IMR-90 (cell line): ENCODE measurements at regions of chr17 and their contacts with region 1.

Region 1: DNA sequence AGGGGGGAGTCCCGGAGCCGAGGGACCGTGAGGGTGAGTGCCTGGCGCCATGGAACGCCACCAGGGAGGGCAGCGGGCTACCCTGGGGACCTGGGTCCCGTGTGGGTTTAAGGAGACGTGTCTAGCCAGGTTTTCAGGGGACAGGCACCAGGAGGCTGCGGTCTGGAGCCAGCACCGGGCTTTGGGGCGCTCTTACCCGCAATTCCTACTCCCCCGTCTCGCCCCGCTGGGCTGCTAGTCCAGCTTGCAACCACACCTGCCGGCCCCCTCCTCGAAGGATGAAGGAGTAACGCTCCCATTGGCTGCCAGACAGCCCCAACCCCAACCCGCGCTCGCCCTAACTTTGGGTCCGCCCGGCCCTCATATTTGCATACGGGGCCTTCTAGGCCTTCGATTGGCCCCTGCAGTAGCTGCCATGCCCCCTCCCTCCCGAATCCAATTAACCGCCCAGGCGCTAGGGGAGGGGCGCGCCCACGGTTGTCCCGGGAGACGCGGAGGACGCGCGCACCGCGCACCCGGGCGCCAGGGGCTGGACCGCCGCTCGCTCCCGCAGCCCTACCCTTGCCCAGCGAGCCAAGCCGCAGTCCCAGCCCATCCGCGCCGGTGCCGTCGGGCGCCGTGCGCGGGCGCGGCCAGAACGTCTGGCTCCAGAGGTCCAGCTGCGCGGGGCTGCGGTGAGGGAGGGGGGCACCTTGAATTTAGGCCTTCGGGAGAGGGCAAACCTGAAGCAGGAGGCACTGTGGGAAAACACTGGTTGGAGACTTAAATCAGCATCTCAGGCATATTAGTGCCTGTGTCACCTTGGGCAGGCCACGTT is at the start of gene TTLL6:
- DNase-seq: peak; percentile 56
- ATAC-seq: peak; percentile 99
- H3K4me3 ChIP-seq: peak within 1 kb of the TSS; percentile 41
- H3K27ac ChIP-seq: no peak within 1 kb of the TSS
- H3K4me1 ChIP-seq: 0 out of 2 replicates have a peak, but pooled peaks cover 2% of the 10 kb centered on the region
- H3K27me3 ChIP-seq: peaks cover 31% of the 10 kb centered on the region
- CTCF ChIP-seq: no peak
- POLR2A ChIP-seq: no peak
- RAD21 ChIP-seq: no peak
- total RNA-seq, gene TTLL6: not detected in 2 replicates

Region 2: DNA sequence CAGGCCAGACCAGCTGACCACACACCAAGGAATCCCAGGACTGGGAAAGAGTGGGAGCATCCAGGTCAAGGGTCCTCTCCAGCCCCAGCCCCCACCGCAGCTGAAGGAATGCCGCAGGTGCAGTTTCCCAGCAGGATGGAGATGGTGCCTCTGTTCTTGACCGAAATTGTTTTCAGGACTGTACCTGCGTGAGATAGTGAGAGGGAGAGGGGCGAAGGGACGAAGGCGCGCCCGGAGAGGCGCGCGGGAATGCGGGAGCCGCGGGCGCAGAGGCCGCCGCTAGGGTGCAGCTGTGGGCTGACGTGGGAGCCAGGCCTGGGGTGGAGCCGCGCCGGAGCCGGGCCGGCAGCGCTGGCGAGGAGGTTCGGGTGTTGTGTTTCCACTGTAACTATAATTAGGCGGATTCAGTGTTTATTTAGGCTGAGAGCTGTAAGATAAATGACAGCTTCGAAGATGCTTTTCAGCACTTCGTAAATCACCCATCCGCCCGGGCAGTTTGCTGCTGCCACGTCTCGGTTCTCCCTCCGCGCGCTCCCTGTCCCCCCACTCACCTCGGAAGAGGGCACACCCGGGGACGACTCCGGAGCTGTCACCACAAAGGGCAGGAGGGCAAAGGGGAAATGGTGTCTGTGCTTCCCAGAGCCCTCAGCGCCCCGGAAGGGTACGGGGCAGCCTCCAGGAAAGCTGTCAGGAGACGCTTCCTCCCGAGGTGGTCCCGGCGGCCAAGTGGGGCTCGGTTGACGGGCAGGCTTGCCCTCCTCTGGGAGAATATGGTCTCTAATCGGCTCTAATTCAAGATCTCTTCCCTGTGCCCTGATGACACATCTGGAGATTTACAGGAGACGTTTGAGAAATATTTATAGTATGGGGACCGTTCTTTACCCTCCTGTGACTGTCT is 324.3 kb before region 1 on chr17:
- CTCF ChIA-PET with region 1: no interaction called
- POLR2A ChIA-PET with region 1: no interaction called
- dilution Hi-C with region 1: no loop called
- in situ Hi-C with region 1: no loop called
- intact Hi-C with region 1: no loop called
- DNase-seq: peak; percentile 74
- ATAC-seq: peak; percentile 91
- H3K4me3 ChIP-seq: peak overlapping the region; percentile 39
- H3K27ac ChIP-seq: peak overlapping the region; percentile 38
- H3K4me1 ChIP-seq: peaks cover 22% of the 10 kb centered on the region
- H3K27me3 ChIP-seq: no peaks in the 10 kb centered on the region
- CTCF ChIP-seq: peak; percentile 86
- POLR2A ChIP-seq: no peak
- RAD21 ChIP-seq: peak; percentile 86

Region 3: GRCh38 chr17:48830840-48831548 is 14.0 kb after region 1 on chr17 and contains the start of gene CALCOCO2:
- CTCF ChIA-PET with region 1: no interaction called
- POLR2A ChIA-PET with region 1: interaction called, 12 read pairs
- dilution Hi-C with region 1: no loop called
- in situ Hi-C with region 1: no loop called
- intact Hi-C with region 1: no loop called
- DNase-seq: peak; percentile 89
- ATAC-seq: peak; percentile 99
- H3K4me3 ChIP-seq: peak within 1 kb of the TSS; percentile 95
- H3K27ac ChIP-seq: peak within 1 kb of the TSS; percentile 87
- H3K4me1 ChIP-seq: peaks cover 5% of the 10 kb centered on the region
- H3K27me3 ChIP-seq: no peaks in the 10 kb centered on the region
- CTCF ChIP-seq: no peak
- POLR2A ChIP-seq: peak; percentile 55; the same call in 1 of the 2 replicates
- RAD21 ChIP-seq: no peak
- total RNA-seq, gene CALCOCO2: 32.2 and 53.4 TPM in 2 replicates

Region 4: GRCh38 chr17:49157784-49158183 is 340.8 kb after region 1 on chr17:
- CTCF ChIA-PET with region 1: no interaction called
- POLR2A ChIA-PET with region 1: no interaction called
- dilution Hi-C with region 1: no loop called
- in situ Hi-C with region 1: no loop called
- intact Hi-C with region 1: no loop called
- DNase-seq: peak; percentile 19
- ATAC-seq: peak; percentile 62
- H3K4me3 ChIP-seq: no peak overlapping the region
- H3K27ac ChIP-seq: no peak overlapping the region
- H3K4me1 ChIP-seq: peaks cover 6% of the 10 kb centered on the region; the same call in 1 of the 2 replicates
- H3K27me3 ChIP-seq: peaks cover 9% of the 10 kb centered on the region
- CTCF ChIP-seq: no peak
- POLR2A ChIP-seq: no peak
- RAD21 ChIP-seq: no peak